HCT116 (cell line): ENCODE measurements at regions of chr22 and their contacts with region 1.

Region 1: GRCh38 chr22:36528795-36529751 is at the start of gene EIF3D:
- DNase-seq: peak; percentile 99
- ATAC-seq: peak; percentile 92
- H3K4me3 ChIP-seq: peak within 1 kb of the TSS; percentile 97 to 99
- H3K27ac ChIP-seq: peak within 1 kb of the TSS; percentile 87
- H3K4me1 ChIP-seq: peaks cover 13 to 32% of the 10 kb centered on the region in 2 experiments; a peak in 3 of 4 replicates
- H3K27me3 ChIP-seq: no peaks in the 10 kb centered on the region
- CTCF ChIP-seq: no peak
- POLR2A ChIP-seq: peak; percentile 58
- RAD21 ChIP-seq: no peak
- total RNA-seq, gene EIF3D: 306 TPM

Region 2: GRCh38 chr22:36339171-36340065 is 189.7 kb before region 1 on chr22:
- CTCF ChIA-PET with region 1: no interaction called
- POLR2A ChIA-PET with region 1: no interaction called
- RAD21 ChIA-PET with region 1: no interaction called
- intact Hi-C with region 1: no loop called
- DNase-seq: no peak
- ATAC-seq: no peak
- H3K4me3 ChIP-seq: no peak overlapping the region
- H3K27ac ChIP-seq: no peak overlapping the region
- H3K4me1 ChIP-seq: peaks cover 0 to 27% of the 10 kb centered on the region in 2 experiments; a peak in 2 of 4 replicates
- H3K27me3 ChIP-seq: no peaks in the 10 kb centered on the region
- CTCF ChIP-seq: no peak
- POLR2A ChIP-seq: no peak
- RAD21 ChIP-seq: no peak

Region 3: GRCh38 chr22:36493690-36494110 is 35.4 kb before region 1 on chr22:
- CTCF ChIA-PET with region 1: no interaction called
- POLR2A ChIA-PET with region 1: no interaction called
- RAD21 ChIA-PET with region 1: no interaction called
- intact Hi-C with region 1: no loop called
- DNase-seq: no peak
- ATAC-seq: no peak
- H3K4me3 ChIP-seq: no peak overlapping the region
- H3K27ac ChIP-seq: no peak overlapping the region
- H3K4me1 ChIP-seq: no peaks in the 10 kb centered on the region
- H3K27me3 ChIP-seq: no peaks in the 10 kb centered on the region
- CTCF ChIP-seq: no peak
- POLR2A ChIP-seq: no peak
- RAD21 ChIP-seq: no peak

Region 4: DNA sequence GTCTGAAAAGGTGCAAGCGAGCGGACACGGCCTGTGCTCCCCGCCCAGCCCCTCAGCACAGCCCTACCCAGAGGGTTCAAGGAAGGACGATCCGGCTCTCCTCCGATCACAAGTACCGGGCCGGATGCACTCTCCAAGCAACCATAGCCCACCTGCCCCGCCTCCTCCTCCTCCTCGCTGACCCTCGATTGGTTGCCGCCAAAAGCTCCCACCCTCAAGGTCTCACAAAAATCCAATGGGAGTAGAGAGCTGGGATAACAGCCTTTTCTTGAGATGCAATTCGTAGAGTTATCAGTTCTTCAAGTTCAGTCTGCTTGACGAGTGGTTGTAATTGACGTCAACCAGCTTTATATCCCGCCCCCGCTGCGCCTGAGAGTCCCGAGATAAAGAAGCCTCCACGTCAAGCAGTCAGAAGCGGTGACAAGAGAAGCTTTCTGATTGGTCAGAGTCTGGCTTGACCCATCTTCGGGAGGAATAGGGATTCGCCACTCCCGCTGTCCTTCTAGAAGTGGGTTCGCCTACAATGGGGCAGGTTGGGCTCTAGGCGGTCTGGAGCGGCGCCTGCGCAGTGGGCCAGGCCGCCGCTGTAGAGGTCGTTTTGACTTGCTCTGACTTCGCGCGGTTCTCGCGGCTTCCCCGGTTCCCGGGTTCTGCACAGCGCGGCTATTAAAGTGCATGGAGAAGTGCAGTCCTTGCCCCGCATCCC is 247.0 kb after region 1 on chr22 and contains the start of gene IFT27:
- CTCF ChIA-PET with region 1: interaction called, 4 read pairs
- POLR2A ChIA-PET with region 1: interaction called, 15 read pairs
- RAD21 ChIA-PET with region 1: no interaction called
- intact Hi-C with region 1: no loop called
- DNase-seq: peak; percentile 100
- ATAC-seq: peak; percentile 95
- H3K4me3 ChIP-seq: peak within 1 kb of the TSS; percentile 89 to 96
- H3K27ac ChIP-seq: peak within 1 kb of the TSS; percentile 24; the same call in 1 of the 2 replicates
- H3K4me1 ChIP-seq: peaks cover 5 to 20% of the 10 kb centered on the region in 2 experiments
- H3K27me3 ChIP-seq: no peaks in the 10 kb centered on the region
- CTCF ChIP-seq: no peak
- POLR2A ChIP-seq: peak; percentile 63
- RAD21 ChIP-seq: no peak
- total RNA-seq, gene IFT27: 23.2 TPM

Region 5: DNA sequence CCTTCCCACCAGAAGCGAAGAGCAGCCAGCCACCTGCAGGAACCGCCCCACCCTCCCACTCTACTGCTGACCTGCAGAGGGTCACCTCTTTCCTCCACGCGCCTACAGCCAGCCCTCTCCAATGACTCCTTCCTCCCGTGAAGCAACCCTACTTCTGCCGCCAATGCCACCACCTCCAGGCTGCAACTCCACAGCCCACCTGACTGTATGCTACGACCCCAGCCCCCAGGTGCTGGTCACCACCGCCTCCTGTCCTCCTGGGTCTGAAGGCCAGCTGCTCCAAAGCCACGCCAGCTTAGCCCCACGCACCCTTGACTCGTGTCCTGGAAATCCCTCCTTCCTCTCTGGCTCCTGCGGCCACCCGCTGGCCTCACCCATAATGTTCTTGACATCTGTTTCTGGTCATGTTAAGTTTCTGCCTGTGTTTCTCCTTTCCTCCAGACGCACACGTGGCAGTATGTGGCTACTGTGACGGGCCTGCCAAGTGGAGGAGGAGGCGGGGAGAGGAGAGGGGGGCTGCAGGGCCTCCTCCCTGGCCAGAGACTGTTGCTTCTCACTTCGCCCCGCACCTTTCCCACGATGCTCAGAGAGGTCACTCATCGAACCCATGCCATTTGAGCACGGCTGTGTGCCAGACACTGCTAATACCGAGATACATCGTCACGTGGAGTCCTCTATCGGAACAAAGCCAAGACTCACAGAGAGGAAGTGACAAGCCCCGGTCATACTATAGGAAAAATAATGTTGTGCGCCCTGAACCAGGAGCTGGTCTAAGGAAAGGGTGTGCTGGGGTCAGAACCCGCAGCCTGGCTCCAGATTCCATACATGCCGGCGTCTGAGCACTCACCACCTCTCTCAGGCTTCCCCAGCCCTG is 647.4 kb after region 1 on chr22:
- CTCF ChIA-PET with region 1: no interaction called
- POLR2A ChIA-PET with region 1: no interaction called
- RAD21 ChIA-PET with region 1: no interaction called
- intact Hi-C with region 1: no loop called
- DNase-seq: no peak
- ATAC-seq: peak; percentile 32; the same call in 1 of the 2 replicates
- H3K4me3 ChIP-seq: no peak overlapping the region
- H3K27ac ChIP-seq: no peak overlapping the region
- H3K4me1 ChIP-seq: peaks cover 2 to 18% of the 10 kb centered on the region in 2 experiments; a peak in 3 of 4 replicates
- H3K27me3 ChIP-seq: no peaks in the 10 kb centered on the region
- CTCF ChIP-seq: no peak
- POLR2A ChIP-seq: no peak
- RAD21 ChIP-seq: no peak